Mammary epithelial cell (primary cell): ENCODE measurements at regions of chr2 and their contacts with region 1.

Region 1: DNA sequence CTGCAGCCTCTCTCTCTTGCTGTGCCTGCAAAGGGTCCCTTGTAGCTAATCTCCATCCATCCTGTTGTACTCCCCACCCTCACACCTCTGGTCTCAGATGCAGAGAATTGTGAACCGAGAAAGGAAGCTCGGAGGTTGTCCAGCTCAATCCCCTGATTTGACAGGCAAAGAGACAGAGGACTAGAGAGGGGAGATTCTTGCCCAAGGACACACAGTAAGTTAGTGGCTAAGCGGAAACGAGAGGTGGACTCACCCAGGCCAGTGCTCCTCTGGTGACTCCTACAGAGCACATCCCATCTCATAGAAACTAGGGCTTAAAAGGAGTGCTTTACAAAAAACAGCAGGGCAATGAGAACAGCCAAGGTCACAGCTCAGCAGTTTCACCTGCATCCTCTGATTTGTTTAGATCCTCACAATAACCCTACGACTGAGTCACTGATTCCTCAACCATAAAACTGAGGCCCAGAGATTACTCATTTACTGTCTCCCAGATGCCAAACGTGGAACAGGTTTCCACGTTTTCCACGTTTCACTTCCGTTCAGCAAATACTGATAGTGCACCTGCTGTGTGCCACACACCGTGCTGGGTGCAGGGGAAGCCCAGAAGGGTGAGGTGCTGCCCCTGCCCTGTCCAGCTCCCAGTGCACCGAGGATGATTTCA is 22.1 kb downstream of the EHD3 start:
- DNase-seq: no peak
- H3K4me3 ChIP-seq: no peak overlapping the region
- H3K27ac ChIP-seq: no peak overlapping the region
- H3K4me1 ChIP-seq: peaks cover 18% of the 10 kb centered on the region
- H3K27me3 ChIP-seq: no peaks in the 10 kb centered on the region
- CTCF ChIP-seq: no peak

Region 2: DNA sequence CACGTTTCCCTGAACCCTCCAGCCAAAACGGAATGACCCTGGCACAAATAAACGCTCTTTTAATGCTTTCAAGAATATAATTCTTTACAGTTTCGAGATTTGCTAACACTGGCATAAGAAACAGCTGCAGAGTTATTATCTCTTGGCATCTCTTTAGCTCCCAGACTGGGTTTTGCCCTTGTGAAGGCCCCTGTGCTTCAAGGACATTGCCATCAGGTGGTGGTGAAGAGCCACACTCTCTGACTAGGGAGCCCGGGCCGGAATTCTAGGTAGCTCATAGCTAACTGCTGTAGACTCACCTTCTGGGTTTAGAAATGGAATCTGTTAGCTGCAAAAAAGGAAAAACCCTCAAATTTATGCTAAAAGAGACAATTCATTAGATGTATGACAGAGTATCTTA is 104.5 kb before region 1 on chr2:
- CTCF ChIA-PET with region 1: no interaction called
- dilution Hi-C with region 1: loop called (anchors 5 kb)
- in situ Hi-C with region 1: no loop called
- intact Hi-C with region 1: no loop called
- DNase-seq: no peak
- H3K4me3 ChIP-seq: no peak overlapping the region
- H3K27ac ChIP-seq: no peak overlapping the region
- H3K4me1 ChIP-seq: no peaks in the 10 kb centered on the region
- H3K27me3 ChIP-seq: peaks cover 4% of the 10 kb centered on the region
- CTCF ChIP-seq: no peak

Region 3: DNA sequence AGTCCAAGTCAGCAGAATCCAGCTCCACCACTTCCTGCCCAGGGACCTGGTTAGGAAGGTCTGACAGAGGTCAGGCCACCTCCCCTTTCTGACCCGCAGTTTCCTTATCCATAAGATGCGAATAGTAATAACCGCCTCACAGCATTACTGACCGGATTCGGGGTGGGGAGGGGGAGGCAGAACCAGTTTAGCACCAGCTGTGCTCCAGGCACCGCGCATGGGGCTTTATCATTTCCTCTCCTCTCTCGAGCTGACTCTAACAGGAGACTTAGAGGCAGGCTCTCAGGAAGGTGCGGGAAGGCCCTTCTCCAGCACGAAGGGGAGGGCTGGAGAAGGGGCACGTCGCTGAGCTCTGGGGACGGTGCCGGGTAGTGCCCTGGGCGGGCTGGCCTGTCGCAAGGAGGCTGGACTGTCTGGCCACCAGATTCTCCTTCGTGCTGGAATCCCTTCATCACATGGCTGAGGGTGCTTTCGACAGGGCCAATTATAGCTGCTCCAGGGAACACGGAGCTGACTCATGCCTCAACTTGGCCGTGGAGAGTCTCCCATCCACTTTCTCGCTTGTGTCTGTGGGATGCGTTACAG is 16.4 kb before region 1 on chr2:
- CTCF ChIA-PET with region 1: no interaction called
- dilution Hi-C with region 1: no loop called
- in situ Hi-C with region 1: no loop called
- intact Hi-C with region 1: loop called (anchors 2 kb)
- DNase-seq: no peak
- H3K4me3 ChIP-seq: no peak overlapping the region
- H3K27ac ChIP-seq: no peak overlapping the region
- H3K4me1 ChIP-seq: peaks cover 32% of the 10 kb centered on the region
- H3K27me3 ChIP-seq: no peaks in the 10 kb centered on the region
- CTCF ChIP-seq: no peak